Activated CD4-positive, alpha-beta memory T cell treated with anti-CD3 and anti-CD28 coated beads for 36 hours (primary cell): ENCODE measurements at regions of chr2 and their contacts with region 1.

Region 1: GRCh38 chr2:113105047-113105785 is 22.2 kb upstream of the IL1RN start:
- DNase-seq: peak; percentile 74
- H3K4me3 Mint-ChIP-seq: no peak overlapping the region
- H3K27ac Mint-ChIP-seq: peak overlapping the region; percentile 99
- H3K4me1 Mint-ChIP-seq: peaks cover 37% of the 10 kb centered on the region
- H3K27me3 Mint-ChIP-seq: peaks cover 8% of the 10 kb centered on the region

Region 2: GRCh38 chr2:112972423-112973086 is 132.7 kb before region 1 on chr2:
- CTCF ChIA-PET with region 1: no interaction called
- POLR2A ChIA-PET with region 1: no interaction called
- intact Hi-C with region 1: no loop called
- DNase-seq: no peak
- H3K4me3 Mint-ChIP-seq: no peak overlapping the region
- H3K27ac Mint-ChIP-seq: no peak overlapping the region
- H3K4me1 Mint-ChIP-seq: peaks cover 10% of the 10 kb centered on the region
- H3K27me3 Mint-ChIP-seq: peaks cover 4% of the 10 kb centered on the region

Region 3: DNA sequence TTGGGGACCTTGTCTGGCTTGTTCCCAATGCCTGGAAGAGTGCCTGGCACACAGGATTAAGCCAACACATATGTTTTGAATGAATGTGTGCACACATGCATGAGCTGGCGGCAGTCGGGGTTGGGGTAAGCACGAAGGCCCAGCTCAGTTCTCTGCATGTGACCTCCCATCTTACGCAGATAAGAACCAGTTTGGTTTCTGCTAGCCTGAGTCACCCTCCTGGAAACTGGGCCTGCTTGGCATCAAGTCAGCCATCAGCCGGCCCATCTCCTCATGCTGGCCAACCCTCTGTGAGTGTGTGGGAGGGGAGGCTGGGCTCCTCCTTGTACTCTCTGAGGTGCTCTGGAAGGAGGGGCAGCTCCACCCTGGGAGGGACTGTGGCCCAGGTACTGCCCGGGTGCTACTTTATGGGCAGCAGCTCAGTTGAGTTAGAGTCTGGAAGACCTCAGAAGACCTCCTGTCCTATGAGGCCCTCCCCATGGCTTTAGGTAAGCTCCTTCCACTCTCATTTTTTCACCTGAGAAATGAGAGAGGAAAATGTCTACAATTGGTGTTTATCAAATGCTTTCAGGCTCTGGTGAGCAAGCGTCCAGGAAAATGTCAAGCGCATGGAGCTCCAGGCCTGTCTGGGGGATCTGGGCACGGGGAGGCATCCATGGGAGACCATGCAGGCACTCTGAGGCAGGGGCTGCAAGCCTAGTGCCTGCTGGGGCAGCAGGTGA is 12.5 kb after region 1 on chr2:
- CTCF ChIA-PET with region 1: interaction called, 3 read pairs
- POLR2A ChIA-PET with region 1: no interaction called
- intact Hi-C with region 1: loop called (anchors 1 kb)
- DNase-seq: peak; percentile 84
- H3K4me3 Mint-ChIP-seq: peak overlapping the region; percentile 13
- H3K27ac Mint-ChIP-seq: peak overlapping the region; percentile 68
- H3K4me1 Mint-ChIP-seq: peaks cover 23% of the 10 kb centered on the region
- H3K27me3 Mint-ChIP-seq: peaks cover 3% of the 10 kb centered on the region

Region 4: GRCh38 chr2:113124181-113124961 is 19.2 kb after region 1 on chr2:
- CTCF ChIA-PET with region 1: no interaction called
- POLR2A ChIA-PET with region 1: no interaction called
- intact Hi-C with region 1: loop called (anchors 1 kb)
- DNase-seq: peak; percentile 29
- H3K4me3 Mint-ChIP-seq: no peak overlapping the region
- H3K27ac Mint-ChIP-seq: peak overlapping the region; percentile 3
- H3K4me1 Mint-ChIP-seq: peaks cover 34% of the 10 kb centered on the region
- H3K27me3 Mint-ChIP-seq: peaks cover 12% of the 10 kb centered on the region